ENCODE measurements at regions of chr12 and their contacts with region 1.

Region 1: DNA sequence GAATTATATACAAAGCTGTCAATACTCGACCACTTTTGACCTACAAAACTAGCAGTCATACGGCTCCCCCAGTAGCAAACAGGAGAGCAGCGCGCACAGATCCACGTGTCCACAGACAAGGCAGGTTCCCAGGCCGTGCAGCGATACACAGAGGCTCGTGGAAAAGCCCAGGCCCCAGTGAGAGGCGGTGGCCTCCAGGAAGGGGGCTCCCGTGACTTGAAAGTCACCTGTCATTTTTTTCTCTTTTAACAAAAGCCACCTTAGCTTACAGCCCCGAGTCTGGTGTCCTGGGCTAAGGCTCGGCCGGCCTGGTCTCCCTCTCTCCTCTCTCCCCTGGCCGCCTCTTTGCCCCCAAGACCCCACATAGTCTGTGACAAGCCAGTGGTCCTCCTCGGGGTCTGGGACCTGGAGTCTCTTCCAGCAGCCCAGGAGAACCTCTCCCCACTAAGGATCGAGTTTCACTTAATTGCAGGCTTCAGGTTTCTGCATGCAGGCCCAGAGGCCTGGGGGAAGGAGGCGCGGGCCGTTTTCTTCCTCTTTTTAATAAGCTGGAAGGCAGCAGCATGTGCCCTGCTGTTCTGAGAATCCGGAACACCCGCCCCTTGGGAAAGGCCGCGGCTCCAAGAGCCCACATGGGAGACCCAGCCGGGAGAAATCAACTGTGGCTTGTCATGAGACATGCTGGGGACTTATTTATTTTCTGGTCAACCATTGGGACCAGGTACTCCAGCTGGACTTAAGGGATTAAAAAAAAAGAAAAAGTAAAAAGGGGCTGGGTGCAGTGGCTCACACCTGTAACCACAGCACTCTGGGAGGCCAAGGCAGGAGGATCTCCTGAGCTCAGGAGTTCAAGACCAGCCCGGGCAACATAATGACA is 15.9 kb downstream of the NCOR2 start:
- DNase-seq: peak in 2 of 4 experiments; percentile 54 to 79
- ATAC-seq: peak; percentile 79
- H3K4me3 ChIP-seq: no peak overlapping the region
- H3K27ac ChIP-seq: peak overlapping the region; percentile 67
- H3K4me1 ChIP-seq: peaks cover 40 to 69% of the 10 kb centered on the region in 2 experiments
- H3K27me3 ChIP-seq: no peaks in the 10 kb centered on the region
- CTCF ChIP-seq: no peak
- EP300 ChIP-seq: no peak
- POLR2A ChIP-seq: no peak
- RAD21 ChIP-seq: no peak

Region 2: GRCh38 chr12:124506145-124506831 is 45.2 kb before region 1 on chr12:
- CTCF ChIA-PET with region 1: no interaction called
- POLR2A ChIA-PET with region 1: no interaction called
- in situ Hi-C with region 1: no loop called
- intact Hi-C with region 1: loop called (anchors 5 kb)
- DNase-seq: peak; percentile 34 to 71 (median 50)
- ATAC-seq: peak; percentile 39
- H3K4me3 ChIP-seq: no peak overlapping the region
- H3K27ac ChIP-seq: peak overlapping the region; percentile 52; the same call in 2 of the 3 replicates
- H3K4me1 ChIP-seq: peaks cover 47 to 75% of the 10 kb centered on the region in 2 experiments
- H3K27me3 ChIP-seq: no peaks in the 10 kb centered on the region
- CTCF ChIP-seq: no peak
- EP300 ChIP-seq: no peak
- POLR2A ChIP-seq: no peak
- RAD21 ChIP-seq: no peak